ENCODE measurements at regions of chr10 and their contacts with region 1.

Region 1: GRCh38 chr10:30751678-30752331 is 122.3 kb upstream of the LYZL2 start:
- DNase-seq: peak; percentile 93

Region 2: GRCh38 chr10:31808258-31809218 is 1056.7 kb after region 1 on chr10:
- intact Hi-C with region 1: loop called in 1 of 2 experiments (anchors 10 kb)
- DNase-seq: no peak

Measured in posterior vena cava (tissue), 2 donors.